Prostate gland (tissue), 2 donors: ENCODE measurements at regions of chr4 and their contacts with region 1.

Region 1: DNA sequence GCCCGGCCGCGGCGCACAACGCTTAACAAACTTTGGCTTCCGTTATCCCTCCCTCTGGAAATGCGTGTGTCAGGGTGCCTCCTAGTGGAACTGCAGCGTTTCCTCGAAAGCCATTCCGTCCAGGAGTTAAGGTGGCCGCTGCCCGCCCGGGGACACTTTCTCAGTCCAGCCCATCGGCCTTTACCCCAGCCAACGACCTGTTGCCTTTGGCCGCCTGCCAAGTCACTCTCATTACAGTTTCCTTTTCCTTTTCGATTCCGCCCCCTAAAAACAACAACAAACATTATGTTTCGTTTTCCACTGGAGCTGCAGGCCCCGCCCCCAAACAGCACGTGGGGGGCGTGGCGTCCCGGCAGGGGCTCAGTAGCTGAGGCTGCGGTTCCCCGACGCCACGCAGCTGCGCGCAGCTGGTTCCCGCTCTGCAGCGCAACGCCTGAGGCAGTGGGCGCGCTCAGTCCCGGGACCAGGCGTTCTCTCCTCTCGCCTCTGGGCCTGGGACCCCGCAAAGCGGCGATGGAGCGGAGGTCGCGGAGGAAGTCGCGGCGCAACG is at the start of gene HERC5:
- DNase-seq: peak; percentile 79
- H3K4me3 ChIP-seq: peak within 1 kb of the TSS; percentile 70 to 74
- H3K27ac ChIP-seq: peak within 1 kb of the TSS; percentile 69 to 73
- H3K4me1 ChIP-seq: no peaks in the 10 kb centered on the region
- H3K27me3 ChIP-seq: no peaks in the 10 kb centered on the region
- CTCF ChIP-seq: peak; percentile 69 to 86 (median 75)
- POLR2A ChIP-seq: peak; percentile 63
- total RNA-seq, gene HERC5: 8.8 to 59.4 TPM

Region 2: GRCh38 chr4:88033309-88033708 is 423.5 kb before region 1 on chr4:
- intact Hi-C with region 1: loop called (anchors 10 kb)
- DNase-seq: peak; percentile 48
- H3K4me3 ChIP-seq: no peak overlapping the region
- H3K27ac ChIP-seq: no peak overlapping the region
- H3K4me1 ChIP-seq: no peaks in the 10 kb centered on the region
- H3K27me3 ChIP-seq: no peaks in the 10 kb centered on the region
- CTCF ChIP-seq: peak in 3 of 4 experiments; percentile 52 to 74 (median 72)
- POLR2A ChIP-seq: no peak

Region 3: DNA sequence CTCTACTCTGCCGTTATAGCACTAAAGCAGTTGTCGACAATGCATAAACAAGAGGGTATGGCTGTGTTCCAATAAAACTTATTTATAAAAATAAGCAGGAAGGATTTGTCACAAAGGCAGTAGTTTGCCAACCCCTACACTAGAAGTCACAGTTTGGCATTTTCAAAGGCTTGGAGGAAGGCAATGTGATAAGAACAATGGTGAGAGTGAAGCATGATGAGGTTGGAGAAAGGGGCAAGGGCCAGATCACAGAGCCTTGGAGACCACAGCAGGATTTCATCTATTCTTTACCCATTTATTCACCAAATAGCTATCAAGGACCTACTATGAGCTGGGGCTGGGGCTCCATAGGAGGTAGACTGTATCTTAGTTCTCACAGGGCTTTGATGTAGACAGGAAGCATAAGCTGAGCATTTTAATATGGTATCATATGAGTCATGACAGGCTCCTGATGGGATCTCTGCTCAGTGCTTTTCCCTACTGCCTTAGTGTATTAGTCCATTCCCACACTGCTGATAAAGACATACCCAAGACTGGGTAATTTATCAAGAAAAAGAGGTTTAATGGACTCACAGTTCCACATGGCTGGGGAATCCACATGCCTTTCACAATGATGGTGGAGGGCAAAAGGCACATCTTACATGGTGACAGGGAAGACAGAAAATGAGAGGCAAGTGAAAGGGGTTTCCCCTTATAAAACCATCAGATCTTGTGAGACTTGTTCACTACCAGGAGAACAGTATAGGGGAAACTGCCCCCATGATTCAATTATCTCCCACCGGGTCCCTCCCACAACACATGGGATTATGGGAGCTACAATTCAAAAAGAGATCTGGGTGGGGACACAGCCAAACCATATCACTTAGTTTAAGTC is 231.4 kb before region 1 on chr4:
- intact Hi-C with region 1: loop called (anchors 5 kb)
- DNase-seq: no peak
- H3K4me3 ChIP-seq: no peak overlapping the region
- H3K27ac ChIP-seq: no peak overlapping the region
- H3K4me1 ChIP-seq: no peaks in the 10 kb centered on the region
- H3K27me3 ChIP-seq: no peaks in the 10 kb centered on the region
- CTCF ChIP-seq: no peak
- POLR2A ChIP-seq: no peak

Region 4: DNA sequence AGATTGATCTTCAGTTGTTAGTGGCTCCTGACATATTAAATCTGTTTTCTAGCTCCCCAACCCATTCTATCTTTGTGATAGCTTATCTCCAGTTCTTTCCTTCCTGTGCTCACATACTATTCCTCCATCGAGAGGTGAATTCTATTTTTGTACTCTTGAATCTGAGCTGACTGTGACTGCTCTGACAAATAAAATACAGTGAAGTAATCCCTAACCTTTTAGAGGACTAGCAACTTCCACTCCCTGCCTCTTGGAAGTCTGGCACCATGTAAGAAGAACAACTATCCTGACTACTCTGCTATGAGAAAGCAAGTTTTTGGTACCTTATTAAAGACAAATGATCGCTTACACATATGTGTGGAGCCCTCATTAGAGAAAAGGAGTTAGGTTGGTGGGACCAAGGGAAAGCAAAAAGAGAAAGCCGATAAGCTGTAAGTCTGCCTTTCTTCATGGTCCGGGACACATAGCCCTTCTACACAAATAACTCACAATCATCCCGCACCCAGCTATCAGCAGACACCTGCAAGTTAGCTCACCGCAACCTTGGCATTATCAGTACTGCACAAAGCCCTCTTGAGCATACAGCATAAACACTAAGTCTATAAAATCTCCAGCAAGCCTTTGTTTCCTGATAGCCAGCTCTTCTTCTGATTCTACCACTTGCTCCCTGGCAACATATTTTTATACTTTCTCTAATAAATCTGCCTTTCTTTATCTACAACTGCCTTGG is 158.9 kb before region 1 on chr4:
- intact Hi-C with region 1: loop called (anchors 5 kb)
- DNase-seq: no peak
- H3K4me3 ChIP-seq: no peak overlapping the region
- H3K27ac ChIP-seq: no peak overlapping the region
- H3K4me1 ChIP-seq: no peaks in the 10 kb centered on the region
- H3K27me3 ChIP-seq: no peaks in the 10 kb centered on the region
- CTCF ChIP-seq: no peak
- POLR2A ChIP-seq: no peak

Region 5: GRCh38 chr4:88378691-88379559 is 77.9 kb before region 1 on chr4 and contains the start of gene HERC6:
- intact Hi-C with region 1: loop called (anchors 2 kb)
- DNase-seq: peak; percentile 79
- H3K4me3 ChIP-seq: peak within 1 kb of the TSS; percentile 97 to 99
- H3K27ac ChIP-seq: peak within 1 kb of the TSS; percentile 99
- H3K4me1 ChIP-seq: no peaks in the 10 kb centered on the region
- H3K27me3 ChIP-seq: no peaks in the 10 kb centered on the region
- CTCF ChIP-seq: peak; percentile 41 to 77 (median 62)
- POLR2A ChIP-seq: peak; percentile 26
- total RNA-seq, gene HERC6: 16.0 to 20.6 TPM

Region 6: DNA sequence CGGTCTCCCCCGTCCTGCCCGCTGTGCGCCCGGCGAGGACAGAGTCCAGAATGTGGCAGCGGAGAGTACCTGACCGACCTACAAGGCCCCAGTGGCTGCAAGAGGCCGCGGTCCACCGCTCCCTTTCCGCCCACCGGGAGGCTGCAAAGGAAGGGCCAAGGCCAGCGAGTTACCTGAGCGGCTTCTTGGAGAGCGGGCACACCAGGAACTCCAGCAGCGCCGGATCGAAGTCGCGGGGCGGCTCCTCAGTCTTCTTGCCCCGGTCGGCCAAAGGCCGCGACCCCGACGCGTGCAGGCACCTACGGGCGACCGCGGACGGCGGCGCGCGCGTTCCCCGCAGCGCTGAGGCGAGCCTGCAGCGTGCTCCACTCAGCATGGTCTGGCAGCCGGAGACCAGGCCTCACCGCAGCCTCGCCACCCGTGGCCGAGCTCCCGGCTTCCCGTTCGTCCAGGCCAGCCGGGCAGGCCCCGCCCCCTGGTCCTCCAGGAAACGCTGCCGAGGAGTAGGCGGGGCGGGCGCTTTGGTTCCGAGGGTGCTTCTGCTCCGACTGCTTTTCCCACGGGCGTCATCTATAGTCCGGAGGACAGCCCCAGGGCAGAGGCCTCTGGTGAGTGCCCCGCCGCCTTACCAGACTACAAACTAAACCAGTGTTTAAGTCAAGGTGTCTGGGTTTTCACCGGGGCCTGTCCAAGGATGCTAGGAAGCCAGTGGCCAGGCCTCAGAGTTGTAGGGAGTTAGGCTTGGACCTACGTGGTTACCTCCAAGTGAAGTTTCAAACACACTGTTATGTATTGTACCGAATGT is 66.7 kb after region 1 on chr4 and contains the start of gene PYURF:
- intact Hi-C with region 1: loop called (anchors 5 kb)
- DNase-seq: peak; percentile 93
- H3K4me3 ChIP-seq: peak within 1 kb of the TSS; percentile 77 to 85
- H3K27ac ChIP-seq: peak within 1 kb of the TSS; percentile 89
- H3K4me1 ChIP-seq: peaks cover 6% of the 10 kb centered on the region
- H3K27me3 ChIP-seq: no peaks in the 10 kb centered on the region
- CTCF ChIP-seq: peak in 1 of 4 experiments; percentile 27
- POLR2A ChIP-seq: peak; percentile 94
- total RNA-seq, gene PYURF: 84.5 to 133 TPM